H1 (cell line): ENCODE measurements at regions of chr11 and their contacts with region 1.

Region 1: GRCh38 chr11:62787005-62787759 is at the start of gene TMEM179B:
- DNase-seq: peak; percentile 93 to 98
- H3K4me3 ChIP-seq: peak within 1 kb of the TSS; percentile 77 to 97 (median 90)
- H3K27ac ChIP-seq: peak within 1 kb of the TSS; percentile 90
- H3K4me1 ChIP-seq: peaks cover 0 to 6% (median 2%) of the 10 kb centered on the region in 4 experiments; a peak in 4 of 7 replicates
- H3K27me3 ChIP-seq: no peaks in the 10 kb centered on the region
- CTCF ChIP-seq: peak; percentile 49 to 67 (median 64)
- EP300 ChIP-seq: peak in 1 of 2 experiments; percentile 71; a peak in 1 of 3 replicates
- POLR2A ChIP-seq: peak; percentile 92 to 94
- RAD21 ChIP-seq: peak; percentile 44 to 51
- total RNA-seq, gene TMEM179B: 16.3 and 18.6 TPM in 2 replicates

Region 2: DNA sequence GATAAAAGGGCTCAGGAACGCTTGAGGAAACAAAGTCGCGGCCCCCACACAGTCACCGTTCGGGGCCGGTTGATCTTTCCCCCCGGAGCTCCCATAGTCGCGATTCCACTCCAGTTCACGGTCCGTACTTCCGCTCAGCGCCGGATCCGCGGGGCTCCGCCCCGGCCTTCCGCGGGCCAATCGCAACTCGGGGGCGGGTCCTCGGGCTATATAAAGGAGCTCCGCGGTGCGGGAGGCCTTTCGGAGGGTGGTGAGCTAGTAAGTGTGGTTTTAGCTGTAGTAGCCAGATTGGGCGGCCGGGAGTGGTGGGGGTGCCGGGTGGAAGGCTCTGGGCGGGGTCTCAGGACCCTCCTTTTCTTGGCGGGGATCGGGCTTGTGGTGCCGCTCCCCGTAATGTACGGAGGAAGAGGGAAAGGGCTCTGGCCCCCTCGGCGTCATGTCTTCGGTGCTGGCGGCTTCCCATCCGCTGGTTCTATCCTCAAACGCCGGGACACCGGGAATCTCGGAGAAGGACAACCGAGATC is 122.0 kb before region 1 on chr11 and contains the starts of genes C11orf98 and CSKMT:
- CTCF ChIA-PET with region 1: interaction called, 3 read pairs
- POLR2A ChIA-PET with region 1: interaction called, 16 read pairs
- DNase-seq: peak; percentile 79 to 99
- H3K4me3 ChIP-seq: peak within 1 kb of the TSS; percentile 83 to 98 (median 95)
- H3K27ac ChIP-seq: peak within 1 kb of the TSS; percentile 81
- H3K4me1 ChIP-seq: peaks cover 4 to 11% (median 8%) of the 10 kb centered on the region in 4 experiments
- H3K27me3 ChIP-seq: no peaks in the 10 kb centered on the region
- CTCF ChIP-seq: no peak; a peak in 1 of 4 replicates
- EP300 ChIP-seq: peak in 1 of 2 experiments; percentile 71; a peak in 1 of 3 replicates
- POLR2A ChIP-seq: peak; percentile 100
- RAD21 ChIP-seq: no peak; a peak in 1 of 4 replicates
- total RNA-seq, gene C11orf98: 171 and 173 TPM in 2 replicates
- total RNA-seq, gene CSKMT: 66.1 and 67.8 TPM in 2 replicates

Region 3: DNA sequence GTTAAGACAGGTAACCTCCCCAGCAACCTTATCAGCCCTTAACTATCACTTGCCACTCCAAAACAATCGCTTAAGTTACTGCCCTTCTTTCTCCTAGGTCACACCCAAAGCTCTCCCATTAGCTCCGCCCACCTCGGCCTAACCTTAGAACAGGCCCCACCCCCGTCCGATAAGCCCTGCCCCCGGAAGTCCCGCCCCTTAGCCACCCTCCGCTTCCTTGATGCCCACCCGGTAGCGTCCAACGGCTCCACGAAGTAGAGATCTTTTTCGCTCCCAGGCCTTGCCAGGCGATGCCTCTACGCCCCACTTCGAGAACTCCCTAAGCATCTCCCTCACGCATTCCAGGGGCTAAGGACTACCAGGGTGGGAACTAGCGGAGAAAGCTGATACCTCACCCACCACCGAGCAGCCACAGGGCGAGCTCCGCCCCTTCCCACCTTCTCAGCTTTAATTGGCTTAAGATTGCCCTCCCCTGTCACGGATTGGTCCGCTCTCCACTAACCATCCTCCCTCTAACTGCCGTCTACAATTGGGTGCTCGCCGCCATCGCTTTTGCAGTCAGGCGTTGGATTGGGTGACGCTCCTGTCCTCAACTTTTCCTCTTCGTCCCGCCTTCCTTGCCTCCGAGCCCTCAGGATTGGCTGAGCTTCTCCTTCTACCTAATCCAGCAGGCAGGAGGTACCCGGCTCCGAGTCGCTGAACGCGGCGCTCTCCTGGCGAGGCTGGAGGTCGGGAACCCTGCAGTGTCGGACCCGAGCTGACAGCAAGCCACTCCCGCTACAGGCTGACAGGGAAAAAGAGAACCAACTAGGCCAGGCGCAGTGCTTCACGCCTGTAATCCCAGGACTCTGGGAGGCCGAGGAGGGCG is 33.2 kb before region 1 on chr11 and contains the start of gene ZBTB3:
- CTCF ChIA-PET with region 1: interaction called, 7 read pairs
- POLR2A ChIA-PET with region 1: interaction called, 46 read pairs
- DNase-seq: peak; percentile 97 to 99
- H3K4me3 ChIP-seq: peak within 1 kb of the TSS; percentile 74 to 89 (median 82)
- H3K27ac ChIP-seq: peak within 1 kb of the TSS; percentile 86
- H3K4me1 ChIP-seq: peaks cover 4 to 9% (median 6%) of the 10 kb centered on the region in 4 experiments
- H3K27me3 ChIP-seq: no peaks in the 10 kb centered on the region
- CTCF ChIP-seq: no peak
- EP300 ChIP-seq: no peak
- POLR2A ChIP-seq: peak; percentile 37 to 79
- RAD21 ChIP-seq: 0 out of 4 replicates have a peak, but pooled peaks of 1 of the 2 experiments have one; percentile 6
- total RNA-seq, gene ZBTB3: 76.5 and 76.9 TPM in 2 replicates

Region 4: GRCh38 chr11:62805076-62805892 is 18.1 kb after region 1 on chr11 and contains the start of gene NXF1:
- CTCF ChIA-PET with region 1: interaction called, 15 read pairs
- POLR2A ChIA-PET with region 1: interaction called, 251 read pairs
- DNase-seq: peak; percentile 96 to 100
- H3K4me3 ChIP-seq: peak within 1 kb of the TSS; percentile 66 to 85 (median 81)
- H3K27ac ChIP-seq: peak within 1 kb of the TSS; percentile 48; the same call in 1 of the 2 replicates
- H3K4me1 ChIP-seq: peaks cover 0 to 5% (median under 1%) of the 10 kb centered on the region in 4 experiments; a peak in 1 of 7 replicates
- H3K27me3 ChIP-seq: no peaks in the 10 kb centered on the region
- CTCF ChIP-seq: peak in 1 of 3 experiments; percentile 20; a peak in 1 of 4 replicates
- EP300 ChIP-seq: peak in 1 of 2 experiments; percentile 65; a peak in 1 of 3 replicates
- POLR2A ChIP-seq: peak; percentile 100
- RAD21 ChIP-seq: 0 out of 4 replicates have a peak, but pooled peaks of 1 of the 2 experiments have one; percentile 4
- total RNA-seq, gene NXF1: 44.8 and 49.8 TPM in 2 replicates

Region 5: DNA sequence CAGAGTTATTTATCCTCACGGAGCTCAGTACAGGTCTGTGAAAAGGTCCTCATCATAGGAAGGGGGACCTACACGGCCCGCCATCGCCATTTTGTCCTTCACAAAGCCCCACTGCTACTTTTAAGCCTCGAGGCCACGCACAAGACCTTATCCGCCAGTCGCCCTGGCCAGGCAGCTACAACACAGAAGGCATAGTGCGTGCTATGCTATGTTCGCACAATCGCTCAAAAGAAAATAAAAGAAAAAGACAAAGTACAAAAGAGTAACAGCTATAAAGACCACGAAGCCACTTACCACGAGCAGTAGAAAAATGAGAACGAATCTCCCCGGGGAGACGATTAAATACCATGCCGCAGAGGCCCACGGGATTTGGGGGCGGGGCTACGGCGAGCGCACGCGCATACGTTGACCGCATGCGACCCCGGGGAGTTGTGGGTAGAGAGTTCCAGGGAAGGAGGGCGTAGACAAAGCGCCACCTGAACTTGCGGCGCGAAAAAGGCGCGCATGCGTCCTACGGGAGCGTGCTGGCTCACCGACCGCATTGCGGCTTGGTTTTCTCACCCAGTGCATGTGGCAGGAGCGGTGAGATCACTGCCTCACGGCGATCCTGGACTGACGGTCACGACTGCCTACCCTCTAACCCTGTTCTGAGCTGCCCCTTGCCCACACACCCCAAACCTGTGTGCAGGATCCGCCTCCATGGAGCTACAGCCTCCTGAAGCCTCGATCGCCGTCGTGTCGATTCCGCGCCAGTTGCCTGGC is 68.6 kb after region 1 on chr11:
- CTCF ChIA-PET with region 1: interaction called, 5 read pairs
- POLR2A ChIA-PET with region 1: interaction called, 150 read pairs
- DNase-seq: peak; percentile 98 to 99
- H3K4me3 ChIP-seq: peak overlapping the region; percentile 74 to 100 (median 90)
- H3K27ac ChIP-seq: peak overlapping the region; percentile 96
- H3K4me1 ChIP-seq: peaks cover 4 to 7% (median 7%) of the 10 kb centered on the region in 4 experiments; a peak in 4 of 7 replicates
- H3K27me3 ChIP-seq: no peaks in the 10 kb centered on the region
- CTCF ChIP-seq: no peak
- EP300 ChIP-seq: no peak
- POLR2A ChIP-seq: peak; percentile 98 to 99
- RAD21 ChIP-seq: no peak

Region 6: DNA sequence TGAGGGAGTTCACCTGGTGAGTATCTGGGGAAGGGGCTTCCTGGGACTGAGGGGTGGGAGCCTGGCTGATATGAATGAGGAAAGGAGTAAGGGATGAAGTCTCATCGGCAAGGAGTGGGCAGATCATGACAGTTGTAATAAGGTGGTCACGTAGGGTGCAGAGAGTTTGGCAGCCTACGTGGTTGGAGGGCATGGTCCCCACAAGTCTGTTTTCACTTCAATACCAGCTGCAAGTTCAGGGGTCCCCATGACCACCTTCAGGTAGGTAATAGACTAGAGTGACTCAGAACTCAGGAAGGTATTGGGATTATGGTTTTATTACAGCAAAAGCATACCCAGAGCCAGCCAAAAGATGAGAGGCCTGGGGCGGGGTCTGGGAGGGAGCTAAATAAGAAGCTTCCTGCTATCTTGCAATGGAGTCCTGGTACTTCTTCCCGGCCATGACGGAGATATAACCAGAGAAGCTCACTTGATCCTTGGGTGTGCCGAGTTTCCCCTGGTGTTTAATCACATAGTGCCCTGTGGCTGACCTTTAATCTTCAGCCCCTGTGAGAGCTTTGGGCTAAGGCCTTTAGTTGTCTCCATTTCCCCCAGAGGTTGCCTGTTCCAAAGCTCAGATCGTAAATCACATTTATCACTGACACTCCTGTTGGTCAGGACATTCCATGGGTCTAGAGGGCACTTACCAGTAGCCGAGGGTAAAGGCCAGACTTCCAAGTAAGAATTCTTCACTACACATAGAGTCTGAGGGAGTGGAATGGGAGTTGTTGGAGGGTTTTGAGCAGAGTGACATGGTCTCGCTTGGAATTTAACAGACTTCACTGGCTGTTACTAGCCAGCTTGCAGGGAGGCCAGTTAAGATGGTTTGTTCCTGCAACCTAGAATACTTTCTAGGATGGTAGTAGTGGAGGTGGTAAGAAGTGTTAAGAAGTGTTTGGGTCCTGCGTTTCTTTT is 102.6 kb after region 1 on chr11:
- CTCF ChIA-PET with region 1: interaction called, 3 read pairs
- POLR2A ChIA-PET with region 1: interaction called, 12 read pairs
- DNase-seq: no peak
- H3K4me3 ChIP-seq: no peak overlapping the region
- H3K27ac ChIP-seq: 0 out of 2 replicates have a peak overlapping the region, but pooled peaks have one; percentile 2
- H3K4me1 ChIP-seq: peaks cover 0 to 5% (median 0%) of the 10 kb centered on the region in 4 experiments; a peak in 3 of 7 replicates
- H3K27me3 ChIP-seq: no peaks in the 10 kb centered on the region
- CTCF ChIP-seq: no peak
- EP300 ChIP-seq: no peak
- POLR2A ChIP-seq: peak; percentile 81 to 89
- RAD21 ChIP-seq: no peak